Lower lobe of right lung (tissue), 2 donors: ENCODE measurements at regions of chr12 and their contacts with region 1.

Region 1: DNA sequence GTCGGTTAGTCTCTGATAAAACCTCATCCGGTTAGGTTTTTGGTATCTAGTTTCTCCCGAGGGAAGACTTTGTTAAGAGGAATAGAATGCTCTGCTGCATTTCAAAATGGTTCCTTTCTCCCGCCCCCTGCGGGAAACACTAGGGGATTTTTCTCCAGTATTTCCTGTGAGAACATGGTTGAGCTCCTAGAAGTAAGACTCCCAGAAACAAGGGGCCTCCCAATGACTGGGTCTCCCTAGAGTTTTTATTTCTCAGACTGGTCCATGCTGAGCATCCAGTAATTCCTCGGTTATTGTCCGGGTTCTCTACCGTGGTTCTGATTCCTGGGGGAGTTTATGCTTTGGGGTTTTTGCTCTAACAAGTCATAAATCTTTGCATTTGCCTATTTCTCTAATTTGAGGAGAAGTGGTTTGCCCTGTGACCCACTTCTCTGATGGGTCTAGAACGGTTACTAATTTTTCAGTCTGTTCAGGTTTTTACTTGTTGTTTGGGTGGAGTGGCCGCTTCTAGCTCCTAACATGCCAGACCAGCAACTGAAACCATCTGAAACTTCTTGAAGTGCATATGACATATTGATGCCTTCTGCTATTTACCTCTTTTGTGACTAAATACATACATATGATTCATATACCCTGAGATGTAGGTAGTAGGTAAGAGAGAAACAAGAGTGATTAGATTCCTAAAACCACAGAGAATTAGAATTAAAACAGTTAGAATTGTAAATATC is 25.1 kb downstream of the TESPA1 start:
- DNase-seq: no peak
- ATAC-seq: no peak
- H3K4me3 ChIP-seq: no peak overlapping the region
- H3K27ac ChIP-seq: no peak overlapping the region
- H3K4me1 ChIP-seq: no peaks in the 10 kb centered on the region
- H3K27me3 ChIP-seq: peaks cover 16% of the 10 kb centered on the region
- CTCF ChIP-seq: no peak

Region 2: GRCh38 chr12:54749191-54749818 is 210.2 kb before region 1 on chr12:
- intact Hi-C with region 1: loop called (anchors 10 kb)
- DNase-seq: no peak
- ATAC-seq: peak; percentile 65 to 69
- H3K4me3 ChIP-seq: no peak overlapping the region
- H3K27ac ChIP-seq: no peak overlapping the region
- H3K4me1 ChIP-seq: no peaks in the 10 kb centered on the region
- H3K27me3 ChIP-seq: peaks cover 3% of the 10 kb centered on the region
- CTCF ChIP-seq: peak; percentile 79

Region 3: DNA sequence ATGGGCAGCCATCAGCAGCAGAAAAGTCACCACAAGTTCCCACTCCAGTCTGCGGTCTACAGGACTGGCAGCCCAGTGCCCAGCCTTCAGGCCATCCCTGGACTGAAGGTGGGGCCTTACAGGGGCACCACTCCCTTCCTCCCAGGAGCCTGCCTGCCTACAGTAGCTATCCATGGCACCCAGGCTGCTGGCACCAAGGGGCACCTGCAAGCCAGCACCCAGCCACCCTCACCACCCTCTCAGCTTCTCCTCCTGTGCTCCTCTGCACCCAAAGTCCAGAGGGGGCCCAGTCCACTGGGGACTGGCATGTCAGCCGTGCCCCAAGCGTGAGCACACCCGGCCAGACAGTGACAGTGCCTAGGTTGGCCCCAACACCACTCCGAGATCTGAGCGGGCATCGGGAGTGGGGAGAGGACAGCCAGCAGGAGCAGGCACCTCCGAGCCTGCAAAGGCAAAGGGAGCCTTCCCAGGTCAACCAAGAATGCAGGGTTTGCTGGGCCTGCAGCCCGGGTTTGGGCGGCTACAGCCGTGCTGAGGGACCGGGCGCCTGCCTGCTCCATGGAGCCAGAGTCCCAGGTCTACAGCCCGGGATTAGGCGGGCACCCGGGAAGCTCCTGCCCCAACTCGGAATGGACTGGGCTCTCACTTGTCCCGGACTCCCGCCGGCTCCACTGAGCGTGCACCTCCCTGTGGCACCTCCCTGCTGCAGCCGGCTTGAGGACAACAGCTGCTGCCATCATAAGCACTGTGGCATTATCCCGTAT is 432.8 kb after region 1 on chr12:
- intact Hi-C with region 1: no loop called
- DNase-seq: no peak
- ATAC-seq: peak in 1 of 2 donors; percentile 13
- H3K4me3 ChIP-seq: no peak overlapping the region
- H3K27ac ChIP-seq: no peak overlapping the region
- H3K4me1 ChIP-seq: no peaks in the 10 kb centered on the region
- H3K27me3 ChIP-seq: no peaks in the 10 kb centered on the region
- CTCF ChIP-seq: no peak